Left cardiac atrium (tissue), 4 donors: ENCODE measurements at regions of chr1 and their contacts with region 1.

Region 1: DNA sequence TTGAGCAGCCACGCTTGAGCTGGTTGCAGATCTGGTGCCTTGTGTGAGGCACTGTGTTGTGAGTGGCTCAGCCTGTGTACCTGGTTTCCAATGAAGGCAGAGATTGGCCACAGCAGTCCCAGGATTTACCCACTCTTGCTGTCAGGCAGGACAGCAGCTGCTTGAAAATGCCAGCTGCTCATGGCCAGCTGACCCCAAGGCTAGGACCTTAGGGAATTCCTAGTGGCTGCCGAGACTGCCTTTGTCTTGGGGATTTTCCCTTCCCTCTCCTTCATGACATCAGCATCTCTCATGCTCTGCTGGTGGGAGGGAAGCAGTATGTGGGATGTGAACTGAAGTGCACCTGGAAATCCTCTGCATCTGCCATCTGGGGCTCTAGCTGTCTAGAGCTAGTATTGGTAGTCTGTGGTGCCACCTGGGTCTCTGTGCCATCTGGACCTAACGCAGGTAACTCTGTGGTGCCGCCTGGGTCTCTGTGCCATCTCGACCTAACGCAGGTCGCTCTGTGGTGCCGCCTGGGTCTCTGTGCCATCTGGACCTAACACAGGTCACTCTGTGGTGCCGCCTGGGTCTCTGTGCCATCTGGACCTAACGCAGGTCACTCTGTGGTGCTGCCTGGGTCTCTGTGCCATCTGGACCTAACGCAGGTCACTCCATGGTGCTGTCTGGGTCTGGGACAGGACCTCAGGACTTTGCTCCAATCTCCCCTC is 3.8 kb upstream of the LRRC47 start:
- DNase-seq: no peak
- ATAC-seq: no peak

Region 2: GRCh38 chr1:3695326-3696217 is 104.6 kb before region 1 on chr1:
- intact Hi-C with region 1: loop called in 1 of 2 experiments (anchors 5 kb)
- DNase-seq: peak; percentile 55
- ATAC-seq: peak; percentile 80 to 82

Region 3: DNA sequence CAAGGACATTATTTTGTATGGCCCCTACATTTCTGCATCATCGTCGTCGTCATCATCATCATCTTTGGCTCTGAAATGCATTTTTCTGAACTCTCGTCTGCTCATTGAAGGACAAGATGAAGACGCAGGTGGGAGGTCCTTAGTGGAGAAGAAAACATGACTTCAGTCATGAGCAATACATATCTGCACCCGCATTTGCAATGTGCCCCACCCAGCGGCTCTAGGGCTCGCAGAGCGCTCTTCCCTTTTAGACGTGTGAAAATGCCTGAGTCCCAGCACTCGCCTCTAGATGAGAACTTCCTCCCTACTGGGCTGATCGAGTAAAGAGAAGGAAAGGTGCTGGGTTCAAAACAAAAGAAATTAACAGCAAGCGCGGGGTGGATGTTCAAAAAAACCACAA is 89.8 kb after region 1 on chr1:
- intact Hi-C with region 1: no loop called
- DNase-seq: no peak
- ATAC-seq: no peak